Caco-2 (cell line): ENCODE measurements at regions of chr3 and their contacts with region 1.

Region 1: GRCh38 chr3:121488628-121489027 is 57.2 kb downstream of the POLQ start:
- DNase-seq: peak in 1 of 2 experiments; percentile 14
- H3K4me3 ChIP-seq: no peak overlapping the region
- H3K4me3 Mint-ChIP-seq: no peak overlapping the region
- H3K27ac Mint-ChIP-seq: no peak overlapping the region
- H3K4me1 ChIP-seq: 0 out of 2 replicates have a peak, but pooled peaks cover 4% of the 10 kb centered on the region
- H3K4me1 Mint-ChIP-seq: no peaks in the 10 kb centered on the region
- H3K27me3 ChIP-seq: no peaks in the 10 kb centered on the region
- H3K27me3 Mint-ChIP-seq: no peaks in the 10 kb centered on the region
- CTCF ChIP-seq: peak in 1 of 2 experiments; percentile 53

Region 2: GRCh38 chr3:121529308-121529707 is 40.7 kb after region 1 on chr3:
- CTCF ChIA-PET with region 1: interaction called, 5 read pairs
- POLR2A ChIA-PET with region 1: no interaction called
- intact Hi-C with region 1: loop called (anchors 1 kb)
- DNase-seq: no peak
- H3K4me3 ChIP-seq: no peak overlapping the region
- H3K4me3 Mint-ChIP-seq: no peak overlapping the region
- H3K27ac Mint-ChIP-seq: no peak overlapping the region
- H3K4me1 ChIP-seq: no peaks in the 10 kb centered on the region
- H3K4me1 Mint-ChIP-seq: no peaks in the 10 kb centered on the region
- H3K27me3 ChIP-seq: no peaks in the 10 kb centered on the region
- H3K27me3 Mint-ChIP-seq: no peaks in the 10 kb centered on the region
- CTCF ChIP-seq: peak; percentile 22 to 40